ENCODE measurements at regions of chr2 and their contacts with region 1.

Region 1: DNA sequence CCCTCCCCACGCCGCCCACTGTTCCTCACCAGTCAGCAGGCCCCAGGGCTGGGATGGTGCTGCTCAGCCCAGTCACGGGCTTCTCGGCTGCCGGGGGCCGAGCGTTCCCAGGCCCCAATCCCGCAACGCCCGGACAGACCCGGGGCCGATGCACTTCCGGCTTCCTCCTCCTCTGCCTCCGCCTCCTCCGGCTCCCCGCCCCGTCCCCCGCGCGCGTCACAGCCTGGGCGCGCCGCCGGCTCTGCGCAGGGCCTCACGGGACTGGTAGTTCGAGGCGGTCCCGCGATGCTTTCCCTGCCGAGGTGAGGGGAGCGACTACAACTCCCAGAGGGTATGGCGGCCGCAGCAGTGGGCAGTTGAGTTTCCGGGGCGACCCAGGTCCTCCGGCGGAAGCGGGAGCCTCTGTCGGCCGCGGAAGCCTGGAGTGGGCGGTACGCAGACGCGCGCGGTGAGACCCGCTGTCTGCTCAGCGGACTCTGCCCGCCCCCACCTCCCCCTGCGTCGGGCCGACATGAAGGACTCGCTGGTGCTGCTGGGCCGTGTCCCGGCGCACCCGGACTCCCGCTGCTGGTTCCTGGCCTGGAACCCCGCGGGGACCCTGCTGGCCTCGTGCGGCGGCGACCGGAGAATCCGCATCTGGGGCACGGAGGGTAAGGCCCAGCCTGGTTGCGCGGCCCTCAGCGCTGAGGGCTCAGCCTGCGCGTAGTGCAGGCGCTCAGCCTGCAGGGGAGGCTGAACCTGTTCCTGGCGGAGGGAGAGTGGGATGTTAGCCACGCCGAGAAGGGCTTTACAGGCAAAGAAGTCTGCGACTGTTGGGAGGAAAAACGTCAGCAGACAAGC is at the starts of genes CIAO1 and TMEM127:
- DNase-seq: peak; percentile 99
- H3K4me3 Mint-ChIP-seq: peak within 1 kb of the TSS; percentile 99
- H3K27ac Mint-ChIP-seq: peak within 1 kb of the TSS; percentile 97
- H3K4me1 Mint-ChIP-seq: peaks cover 50% of the 10 kb centered on the region
- H3K27me3 Mint-ChIP-seq: no peaks in the 10 kb centered on the region
- total RNA-seq, gene CIAO1: 86.6 to 87.1 TPM
- total RNA-seq, gene TMEM127: 19.3 to 22.2 TPM

Region 2: DNA sequence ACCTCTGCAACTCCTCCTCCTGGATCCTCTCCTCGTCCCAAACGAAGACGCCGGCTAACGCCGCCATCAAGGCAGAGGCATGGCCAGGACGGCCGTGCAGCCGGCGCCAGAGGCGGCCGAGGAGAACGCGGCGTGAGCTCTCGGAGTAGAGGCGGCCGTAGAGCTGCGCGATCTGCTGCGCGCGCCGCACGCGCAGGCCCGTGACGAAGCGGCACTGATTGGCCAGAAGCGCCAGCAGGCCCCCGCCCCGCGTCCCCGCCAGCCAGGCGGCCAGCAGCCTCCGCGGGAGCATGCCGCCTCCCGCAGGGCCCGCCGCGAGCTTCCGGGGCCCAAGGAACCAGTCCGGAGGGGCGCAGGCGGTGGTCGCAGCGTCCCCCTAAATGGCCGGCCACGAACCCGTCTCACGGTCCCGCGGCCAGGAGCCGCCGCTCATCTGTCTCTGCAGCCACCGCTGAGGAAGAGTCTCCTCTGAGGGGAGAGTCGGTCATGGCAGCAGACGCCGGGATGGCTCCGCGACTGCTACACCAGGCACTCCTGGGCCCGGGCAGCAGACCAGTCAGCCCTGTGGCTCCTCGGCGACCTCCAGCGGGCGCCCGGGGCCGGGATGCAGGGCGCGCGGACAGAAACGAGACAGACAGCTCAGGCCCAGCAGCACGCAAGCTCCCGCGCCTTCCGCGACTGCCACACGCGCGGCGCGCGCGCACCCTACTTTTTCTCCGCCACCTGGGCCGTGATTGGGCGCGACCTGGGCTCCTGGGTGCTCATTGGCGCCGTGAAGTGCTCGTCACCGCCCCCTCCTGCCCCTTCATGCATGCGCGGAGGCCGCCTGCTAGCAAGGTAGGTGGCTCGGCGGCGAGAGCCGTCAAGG is 57.7 kb before region 1 on chr2 and contains the start of gene STARD7:
- CTCF ChIA-PET with region 1: interaction called, 20 read pairs
- POLR2A ChIA-PET with region 1: interaction called, 20 read pairs
- intact Hi-C with region 1: loop called (anchors 1 kb)
- DNase-seq: peak; percentile 99
- H3K4me3 Mint-ChIP-seq: peak within 1 kb of the TSS; percentile 98
- H3K27ac Mint-ChIP-seq: peak within 1 kb of the TSS; percentile 92
- H3K4me1 Mint-ChIP-seq: peaks cover 53% of the 10 kb centered on the region
- H3K27me3 Mint-ChIP-seq: no peaks in the 10 kb centered on the region
- total RNA-seq, gene STARD7: 173 to 181 TPM

Region 3: DNA sequence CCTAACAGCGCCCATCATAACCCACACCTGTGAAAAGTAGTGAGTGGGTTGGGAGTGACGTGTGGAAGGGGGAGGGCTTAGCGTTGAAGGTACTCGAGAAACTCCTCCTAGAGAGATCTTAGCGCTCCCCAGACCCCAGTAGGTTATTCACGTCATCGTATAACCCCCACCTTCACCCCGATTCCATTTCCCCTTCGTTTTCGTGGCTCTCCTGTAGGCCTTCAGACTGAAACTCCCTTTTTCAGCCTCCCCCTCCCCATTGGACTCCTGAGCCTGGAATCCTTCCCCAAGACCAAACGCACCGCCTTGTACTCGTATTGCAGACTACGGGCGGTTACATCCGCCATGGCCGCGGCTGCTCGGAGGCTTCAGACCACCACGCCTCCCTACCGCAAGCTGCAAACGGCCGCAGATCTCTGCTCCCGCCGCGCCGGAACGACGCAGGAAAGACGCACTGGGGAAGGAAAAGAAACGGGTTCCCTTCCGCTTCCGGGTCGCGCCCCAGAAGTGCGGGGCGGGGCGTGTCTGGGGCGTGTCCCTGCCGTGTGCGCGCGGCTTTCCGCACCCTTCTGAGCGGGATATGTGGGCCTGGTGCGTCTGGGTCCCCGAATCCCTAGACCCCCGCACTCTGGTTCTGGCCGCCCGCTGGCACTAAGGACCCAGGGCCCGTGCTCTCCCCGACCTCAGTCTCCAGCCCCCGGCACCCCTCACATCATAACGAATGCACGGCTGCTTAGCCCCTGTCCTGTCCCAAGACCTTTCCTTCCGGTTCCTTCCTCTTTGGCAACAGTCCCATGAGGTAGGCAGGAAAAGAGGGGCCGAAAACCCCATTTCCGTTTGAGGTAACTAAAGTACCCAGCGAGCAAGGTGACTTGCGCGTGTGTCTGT is 39.3 kb after region 1 on chr2 and contains the start of gene SNRNP200:
- CTCF ChIA-PET with region 1: no interaction called
- POLR2A ChIA-PET with region 1: interaction called, 5 read pairs
- intact Hi-C with region 1: loop called (anchors 1 kb)
- DNase-seq: peak; percentile 94
- H3K4me3 Mint-ChIP-seq: peak within 1 kb of the TSS; percentile 99
- H3K27ac Mint-ChIP-seq: peak within 1 kb of the TSS; percentile 97
- H3K4me1 Mint-ChIP-seq: peaks cover 47% of the 10 kb centered on the region
- H3K27me3 Mint-ChIP-seq: no peaks in the 10 kb centered on the region
- total RNA-seq, gene SNRNP200: 165 to 175 TPM

Region 4: DNA sequence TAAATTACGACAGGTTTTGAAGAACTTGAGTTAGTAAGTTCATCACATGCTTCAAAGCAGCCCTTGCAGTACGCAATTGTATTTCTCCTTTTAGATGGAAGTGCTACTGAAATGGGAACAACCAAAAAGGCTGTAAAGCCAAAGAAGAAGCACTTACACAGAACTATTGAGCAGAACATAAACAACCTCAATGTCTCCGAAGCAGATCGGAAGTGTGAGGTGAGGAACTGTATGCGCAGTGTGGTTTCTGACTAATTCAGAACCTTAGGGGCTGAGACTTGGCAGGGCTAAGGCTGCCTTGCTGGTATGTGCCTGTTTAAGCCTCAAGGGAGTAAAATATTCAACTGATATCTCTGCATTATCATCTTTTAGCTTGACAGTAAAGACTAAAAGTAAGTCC is 78.0 kb after region 1 on chr2:
- CTCF ChIA-PET with region 1: no interaction called
- POLR2A ChIA-PET with region 1: interaction called, 4 read pairs
- intact Hi-C with region 1: loop called (anchors 2 kb)
- DNase-seq: peak; percentile 77
- H3K4me3 Mint-ChIP-seq: no peak overlapping the region
- H3K27ac Mint-ChIP-seq: peak overlapping the region; percentile 87
- H3K4me1 Mint-ChIP-seq: peaks cover 67% of the 10 kb centered on the region
- H3K27me3 Mint-ChIP-seq: no peaks in the 10 kb centered on the region

Measured in activated CD4-positive, alpha-beta memory T cell treated with anti-CD3 and anti-CD28 coated beads for 36 hours (primary cell).